ENCODE measurements at regions of chr12 and their contacts with region 1.

Region 1: DNA sequence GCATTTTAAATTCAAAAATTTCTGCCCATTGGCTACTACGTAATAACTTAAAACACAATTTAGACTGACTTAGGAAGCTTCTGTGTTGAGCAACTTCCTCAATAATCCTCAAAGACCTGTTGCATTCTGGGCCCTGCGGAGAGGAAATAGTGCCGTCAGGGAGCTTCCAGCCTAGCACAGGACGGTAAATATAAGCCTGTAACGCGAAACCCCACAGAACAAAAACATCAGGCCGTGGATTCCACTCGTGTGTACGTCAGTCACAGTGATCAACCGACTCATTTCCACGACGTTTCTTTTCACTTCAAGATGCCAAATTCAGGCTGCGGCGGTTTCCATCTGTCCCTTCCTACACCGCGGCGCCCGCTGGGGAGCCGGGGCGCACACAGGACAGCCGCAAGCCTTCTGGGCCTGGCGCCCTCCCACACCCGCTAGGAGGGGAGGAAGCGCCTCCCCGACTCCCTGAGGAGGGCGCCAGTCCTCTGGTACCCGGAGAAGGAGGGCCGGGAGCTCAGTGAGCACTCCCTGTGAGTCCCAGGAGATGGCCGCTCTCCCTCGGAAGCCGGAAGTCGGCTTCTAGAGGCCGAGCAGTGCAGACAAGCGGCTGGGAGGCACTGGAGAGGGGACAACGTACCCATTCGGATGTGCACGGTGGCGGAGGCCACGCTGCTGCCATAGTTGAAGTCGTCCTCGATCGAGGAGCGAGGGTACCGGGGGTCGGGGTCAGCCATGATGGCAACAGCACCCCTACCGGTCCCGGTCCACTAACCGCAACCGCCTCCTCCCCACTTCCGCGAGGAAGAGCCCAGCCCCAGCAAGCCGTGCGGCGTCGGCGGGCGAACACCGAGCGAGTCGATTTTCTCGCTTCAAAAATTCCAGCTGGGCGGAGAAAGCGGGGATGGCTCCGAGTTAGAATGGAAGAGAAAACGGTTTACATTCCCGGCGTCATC is at the start of gene TMBIM4:
- DNase-seq: peak; percentile 36 to 93
- H3K4me3 ChIP-seq: peak within 1 kb of the TSS; percentile 79 to 85
- H3K27ac ChIP-seq: peak within 1 kb of the TSS; percentile 100
- H3K4me1 ChIP-seq: peaks cover 0 to 9% of the 10 kb centered on the region in 2 donors
- H3K27me3 ChIP-seq: no peaks in the 10 kb centered on the region
- CTCF ChIP-seq: peak; percentile 42 to 52 (median 46)
- total RNA-seq, gene TMBIM4: 114 TPM

Region 2: GRCh38 chr12:66130277-66131066 is 39.0 kb before region 1 on chr12 and contains the start of gene LLPH:
- intact Hi-C with region 1: loop called (anchors 1 kb)
- DNase-seq: peak; percentile 53 to 93
- H3K4me3 ChIP-seq: peak within 1 kb of the TSS; percentile 82 to 98
- H3K27ac ChIP-seq: peak within 1 kb of the TSS; percentile 51 to 74
- H3K4me1 ChIP-seq: peaks cover 0 to 6% of the 10 kb centered on the region in 2 donors
- H3K27me3 ChIP-seq: no peaks in the 10 kb centered on the region
- CTCF ChIP-seq: no peak
- total RNA-seq, gene LLPH: 0.21 TPM

Region 3: GRCh38 chr12:66188584-66189485 is 19.3 kb after region 1 on chr12 and contains the start of gene IRAK3:
- intact Hi-C with region 1: loop called (anchors 2 kb)
- DNase-seq: peak; percentile 65 to 95
- H3K4me3 ChIP-seq: peak within 1 kb of the TSS; percentile 72 to 79
- H3K27ac ChIP-seq: peak within 1 kb of the TSS; percentile 81 to 85
- H3K4me1 ChIP-seq: peaks cover 0 to 5% of the 10 kb centered on the region in 2 donors
- H3K27me3 ChIP-seq: no peaks in the 10 kb centered on the region
- CTCF ChIP-seq: no peak
- total RNA-seq, gene IRAK3: 35.9 TPM

Region 4: DNA sequence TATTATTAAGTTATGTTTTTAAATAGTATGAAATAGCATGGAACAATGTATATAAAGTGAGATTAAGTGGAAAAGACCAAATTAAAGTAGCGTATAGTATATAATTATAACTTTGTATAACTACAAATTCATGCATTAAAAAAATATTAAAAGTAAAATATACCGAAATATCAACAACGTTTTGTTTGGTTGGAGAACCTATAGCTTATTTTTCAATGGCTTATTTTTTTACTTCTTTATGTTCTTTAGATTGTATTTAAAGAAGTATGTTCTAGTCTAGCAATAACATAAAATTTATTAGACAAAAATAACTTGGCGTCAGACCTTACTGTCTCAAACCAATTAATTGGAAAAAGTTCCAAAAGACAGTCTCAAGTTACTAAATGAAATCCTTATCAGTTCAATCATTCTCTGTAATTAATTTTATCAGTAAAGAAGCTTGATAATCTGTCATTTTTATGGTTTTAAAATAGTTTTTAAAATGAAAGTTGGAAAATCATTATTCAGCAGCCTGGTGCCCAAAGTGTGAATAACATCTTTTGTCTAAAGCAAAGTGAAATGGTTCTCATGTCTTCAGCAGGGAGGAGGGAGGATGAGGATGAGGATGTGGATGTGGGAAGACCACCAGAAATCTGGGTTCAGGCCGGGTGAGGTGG is 66.3 kb after region 1 on chr12:
- intact Hi-C with region 1: loop called (anchors 2 kb)
- DNase-seq: no peak
- H3K4me3 ChIP-seq: peak overlapping the region; percentile 55 to 72
- H3K27ac ChIP-seq: peak overlapping the region in 1 of 2 donors; percentile 69
- H3K4me1 ChIP-seq: peaks cover 2 to 7% of the 10 kb centered on the region in 2 donors
- H3K27me3 ChIP-seq: no peaks in the 10 kb centered on the region
- CTCF ChIP-seq: no peak